ENCODE measurements at regions of chr1 and their contacts with region 1.

Region 1: DNA sequence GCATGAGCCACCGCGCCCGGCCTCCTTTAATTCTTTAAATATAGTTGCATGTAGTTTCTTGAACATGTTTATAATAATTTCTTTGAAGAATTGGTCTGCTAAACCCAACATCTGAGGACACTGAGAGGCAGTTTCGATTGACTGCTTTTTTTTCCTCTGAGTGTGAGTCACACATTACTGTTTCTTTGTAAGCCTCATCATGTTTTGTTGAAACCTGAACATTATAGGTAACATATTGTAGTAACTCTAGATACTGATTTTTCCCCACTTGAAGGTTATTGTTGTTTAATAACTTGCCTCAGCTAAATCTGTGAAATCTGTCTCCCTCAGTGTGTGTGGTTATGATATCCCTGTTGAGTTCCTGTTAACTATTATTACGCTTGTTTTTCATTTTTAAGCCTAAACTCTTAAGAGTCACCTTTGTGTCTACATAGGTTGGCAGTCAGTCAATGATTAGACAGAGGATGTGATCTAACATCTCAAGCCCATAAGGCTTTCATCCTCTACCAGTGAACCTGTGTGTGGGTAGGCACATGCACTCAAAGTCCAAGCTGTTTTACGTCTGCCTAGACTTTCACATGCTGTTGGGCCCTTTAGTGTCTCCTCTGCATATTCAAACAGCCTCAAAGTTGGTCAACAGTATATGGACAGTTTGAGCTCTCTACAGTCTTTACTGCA is 155.5 kb downstream of the KCNH1 start:
- DNase-seq: no peak
- ATAC-seq: no peak
- H3K4me3 Mint-ChIP-seq: no peak overlapping the region
- H3K27ac Mint-ChIP-seq: no peak overlapping the region
- H3K4me1 Mint-ChIP-seq: no peaks in the 10 kb centered on the region
- H3K27me3 Mint-ChIP-seq: peaks cover 12% of the 10 kb centered on the region

Region 2: DNA sequence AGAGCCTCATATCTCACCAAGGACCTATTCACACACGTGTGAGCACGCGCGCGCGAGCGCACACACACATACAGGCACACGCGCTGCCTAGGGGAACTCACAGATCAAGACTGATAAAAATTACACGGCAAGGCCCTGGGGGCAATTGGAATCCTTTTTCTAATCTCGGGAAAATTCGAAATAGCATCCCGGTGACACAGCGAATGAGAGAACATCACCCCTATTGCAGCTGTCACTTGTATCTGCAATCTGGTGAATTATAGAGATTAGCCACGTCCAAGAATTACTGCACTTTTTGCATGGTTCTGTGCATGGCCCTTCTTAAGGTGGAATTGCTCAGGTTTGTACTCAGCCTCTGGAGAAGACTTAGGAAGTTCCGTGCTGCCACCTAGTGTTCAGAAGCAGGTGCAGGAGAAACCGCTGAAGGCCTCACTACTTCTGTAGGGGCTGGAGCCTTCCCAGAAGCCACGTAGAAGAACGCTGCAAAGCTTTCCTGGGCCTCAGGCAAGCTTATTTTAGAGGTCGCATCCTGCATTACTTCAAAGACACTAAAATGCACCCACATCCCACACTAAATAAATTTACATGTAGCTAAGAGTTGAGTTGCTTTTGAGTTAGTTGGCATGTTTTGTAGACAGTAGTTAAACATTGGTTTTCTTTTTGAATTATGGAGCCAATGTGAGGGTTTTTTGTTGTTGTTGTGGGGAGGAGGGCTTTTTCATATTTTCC is 1624.2 kb before region 1 on chr1:
- CTCF ChIA-PET with region 1: no interaction called
- POLR2A ChIA-PET with region 1: no interaction called
- intact Hi-C with region 1: loop called in 1 of 2 experiments (anchors 5 kb)
- DNase-seq: peak; percentile 75
- ATAC-seq: peak; percentile 82
- H3K4me3 Mint-ChIP-seq: no peak overlapping the region
- H3K27ac Mint-ChIP-seq: no peak overlapping the region
- H3K4me1 Mint-ChIP-seq: no peaks in the 10 kb centered on the region
- H3K27me3 Mint-ChIP-seq: no peaks in the 10 kb centered on the region

Region 3: DNA sequence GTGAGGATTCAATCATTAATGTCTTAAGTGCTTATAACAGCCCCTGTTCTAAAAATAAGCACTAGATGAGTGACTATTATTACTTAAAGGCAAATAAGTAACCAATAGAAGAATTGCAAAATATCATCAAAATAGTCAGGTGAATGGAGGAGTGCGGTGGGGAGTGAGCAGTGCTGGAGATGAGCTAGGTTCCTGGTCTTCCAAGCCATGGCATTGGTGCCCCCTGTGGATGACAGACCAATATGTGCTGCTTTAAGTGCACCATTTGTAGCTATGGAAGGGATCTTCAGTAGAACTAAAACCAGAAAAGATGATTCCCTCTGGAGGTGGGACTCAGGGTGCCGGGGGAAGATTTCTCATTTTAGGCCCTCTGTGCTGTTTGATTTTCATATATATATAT is 646.6 kb after region 1 on chr1:
- CTCF ChIA-PET with region 1: no interaction called
- POLR2A ChIA-PET with region 1: no interaction called
- intact Hi-C with region 1: no loop called
- DNase-seq: peak; percentile 40
- ATAC-seq: peak; percentile 53
- H3K4me3 Mint-ChIP-seq: no peak overlapping the region
- H3K27ac Mint-ChIP-seq: no peak overlapping the region
- H3K4me1 Mint-ChIP-seq: peaks cover 3% of the 10 kb centered on the region
- H3K27me3 Mint-ChIP-seq: no peaks in the 10 kb centered on the region